Activated T-helper 1 cell treated with anti-CD3 and anti-CD28 coated beads, Interleukin-12 subunit alpha, Interleukin-12 subunit beta, Interleukin-2, Interleukin-4 antibody, amounts not matched to agents 30 ng/mL and 10 ng/mL and 1 ng/mL, durations not matched to agents 14 hours and 24 hours and 36 hours (primary cell): ENCODE measurements at regions of chr6 and their contacts with region 1.

Region 1: DNA sequence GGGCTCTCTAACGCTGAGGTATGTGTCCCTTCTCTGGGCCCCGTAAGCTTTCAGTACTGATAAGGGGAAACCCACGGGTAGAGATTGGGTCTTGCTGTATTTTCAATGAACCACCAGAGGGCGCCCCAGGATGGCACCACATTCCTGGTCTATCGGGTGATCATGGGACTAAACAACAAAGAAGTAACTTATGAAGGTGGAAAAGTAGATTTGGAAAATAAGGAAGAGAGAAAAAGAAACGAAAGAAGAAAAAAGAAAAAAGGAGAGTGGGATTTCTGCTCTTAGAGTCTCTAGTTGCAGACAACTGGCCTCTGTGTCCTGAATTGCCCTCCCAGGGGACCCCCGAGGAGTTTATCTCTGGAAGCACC is 93.8 kb downstream of the GMPR start:
- DNase-seq: peak; percentile 74
- H3K4me3 Mint-ChIP-seq: no peak overlapping the region
- H3K27ac Mint-ChIP-seq: no peak overlapping the region
- H3K4me1 Mint-ChIP-seq: peaks cover 18% of the 10 kb centered on the region
- H3K27me3 Mint-ChIP-seq: no peaks in the 10 kb centered on the region

Region 2: DNA sequence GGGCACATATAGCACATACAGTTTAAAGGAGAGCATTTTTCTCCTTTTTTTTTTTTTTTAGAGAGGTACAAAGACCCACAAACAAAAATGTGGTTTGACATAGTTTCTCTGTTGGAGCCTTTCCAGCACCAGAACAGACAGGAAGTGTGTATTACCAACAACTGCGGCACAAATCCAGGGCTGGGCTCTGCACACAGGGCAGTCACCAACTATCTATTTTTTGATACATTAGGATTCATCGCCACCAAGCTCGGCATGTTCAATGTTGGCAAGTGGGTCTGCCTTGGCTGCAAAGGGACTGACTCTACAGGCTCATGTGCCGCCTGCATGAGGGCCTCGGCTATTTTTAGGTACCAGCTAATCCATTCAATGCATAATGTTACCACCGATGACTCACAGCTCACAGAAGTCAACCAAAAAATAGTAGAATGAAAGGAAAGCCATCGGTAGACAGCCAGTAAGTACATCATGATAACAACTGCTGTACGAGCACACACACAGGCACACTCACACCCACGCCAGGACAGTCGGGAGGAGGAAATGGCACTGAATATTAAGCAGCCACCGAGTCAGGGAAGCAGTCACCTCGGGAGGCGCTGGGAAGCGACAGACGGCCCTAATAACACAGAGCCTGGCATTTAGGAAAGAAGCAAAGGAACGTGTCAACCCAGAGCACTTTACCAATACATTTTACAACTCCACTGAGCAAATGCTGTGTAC is 12.2 kb before region 1 on chr6:
- intact Hi-C with region 1: loop called (anchors 1 kb)
- DNase-seq: peak; percentile 65
- H3K4me3 Mint-ChIP-seq: peak overlapping the region; percentile 56
- H3K27ac Mint-ChIP-seq: peak overlapping the region; percentile 81
- H3K4me1 Mint-ChIP-seq: peaks cover 76% of the 10 kb centered on the region
- H3K27me3 Mint-ChIP-seq: no peaks in the 10 kb centered on the region

Region 3: GRCh38 chr6:16481697-16482399 is 149.7 kb after region 1 on chr6:
- intact Hi-C with region 1: loop called (anchors 1 kb)
- DNase-seq: peak; percentile 74
- H3K4me3 Mint-ChIP-seq: peak overlapping the region; percentile 56
- H3K27ac Mint-ChIP-seq: peak overlapping the region; percentile 97
- H3K4me1 Mint-ChIP-seq: peaks cover 89% of the 10 kb centered on the region
- H3K27me3 Mint-ChIP-seq: no peaks in the 10 kb centered on the region

Region 4: GRCh38 chr6:16591396-16592222 is 259.4 kb after region 1 on chr6:
- intact Hi-C with region 1: loop called (anchors 5 kb)
- DNase-seq: no peak
- H3K4me3 Mint-ChIP-seq: no peak overlapping the region
- H3K27ac Mint-ChIP-seq: peak overlapping the region; percentile 87
- H3K4me1 Mint-ChIP-seq: peaks cover 38% of the 10 kb centered on the region
- H3K27me3 Mint-ChIP-seq: no peaks in the 10 kb centered on the region

Region 5: GRCh38 chr6:16770701-16771569 is 438.8 kb after region 1 on chr6:
- intact Hi-C with region 1: loop called (anchors 1 kb)
- DNase-seq: peak; percentile 68
- H3K4me3 Mint-ChIP-seq: peak overlapping the region; percentile 12
- H3K27ac Mint-ChIP-seq: no peak overlapping the region
- H3K4me1 Mint-ChIP-seq: peaks cover 47% of the 10 kb centered on the region
- H3K27me3 Mint-ChIP-seq: no peaks in the 10 kb centered on the region

Region 6: DNA sequence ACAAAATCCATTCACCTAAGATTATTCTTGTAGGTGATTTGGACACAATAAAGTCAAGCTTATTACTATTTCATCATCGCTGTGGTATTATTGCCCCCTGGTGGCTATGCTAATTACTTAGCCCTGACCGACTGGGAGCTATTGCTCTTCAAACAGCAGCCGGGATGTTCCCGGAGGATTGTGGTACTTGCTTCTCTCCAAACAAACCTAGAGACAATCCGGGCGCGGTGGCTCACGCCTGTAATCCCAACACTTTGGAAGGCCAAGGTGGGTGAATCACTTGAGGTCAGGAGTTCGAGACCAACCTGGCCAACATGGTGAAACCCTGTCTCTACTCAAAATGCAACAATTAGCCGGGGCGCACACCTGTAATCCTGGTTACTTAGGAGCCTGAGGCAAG is 754.3 kb after region 1 on chr6:
- intact Hi-C with region 1: loop called (anchors 1 kb)
- DNase-seq: no peak
- H3K4me3 Mint-ChIP-seq: no peak overlapping the region
- H3K27ac Mint-ChIP-seq: no peak overlapping the region
- H3K4me1 Mint-ChIP-seq: no peaks in the 10 kb centered on the region
- H3K27me3 Mint-ChIP-seq: peaks cover 7% of the 10 kb centered on the region